Activated T-helper 1 cell treated with anti-CD3 and anti-CD28 coated beads, Interleukin-12 subunit alpha, Interleukin-12 subunit beta, Interleukin-2, Interleukin-4 antibody, amounts not matched to agents 30 ng/mL and 10 ng/mL and 1 ng/mL, durations not matched to agents 14 hours and 24 hours and 36 hours (primary cell): ENCODE measurements at regions of chr14 and their contacts with region 1.

Region 1: GRCh38 chr14:65287264-65288131 is 125.0 kb upstream of the FUT8 start:
- DNase-seq: peak; percentile 63
- H3K4me3 Mint-ChIP-seq: peak overlapping the region; percentile 82
- H3K27ac Mint-ChIP-seq: peak overlapping the region; percentile 97
- H3K4me1 Mint-ChIP-seq: peaks cover 82% of the 10 kb centered on the region
- H3K27me3 Mint-ChIP-seq: no peaks in the 10 kb centered on the region

Region 2: DNA sequence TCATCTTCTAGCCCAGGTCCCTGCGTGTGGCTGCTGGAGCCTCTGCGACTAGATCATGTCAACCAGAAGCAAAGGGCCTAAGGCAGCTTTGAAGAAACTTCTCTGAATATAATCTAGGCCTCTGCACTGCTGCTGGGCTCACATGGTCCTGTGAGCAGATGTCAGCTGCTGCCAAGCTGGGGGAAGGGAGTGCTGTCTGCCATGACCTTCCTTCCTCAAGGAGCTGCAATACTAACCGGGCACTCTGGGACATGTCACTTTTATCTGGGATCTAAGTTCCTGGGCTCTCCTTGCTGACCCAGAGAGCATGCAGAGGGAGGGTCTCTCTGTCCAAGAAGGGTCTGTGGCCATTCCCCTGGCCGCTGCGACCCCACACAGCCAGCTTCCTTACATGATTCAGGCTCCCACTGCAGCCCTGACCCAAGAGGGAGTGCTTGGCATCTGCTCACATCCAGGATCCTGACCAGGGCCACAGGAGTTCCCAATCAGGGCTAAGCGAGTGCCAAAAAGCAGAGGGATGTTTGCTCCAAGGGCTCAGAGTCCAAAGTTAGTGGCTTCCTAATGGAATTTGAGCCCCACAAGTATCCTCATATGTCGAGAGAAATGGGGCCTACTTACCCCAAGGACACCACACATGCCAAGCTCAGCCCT is 509.3 kb before region 1 on chr14:
- intact Hi-C with region 1: no loop called
- DNase-seq: no peak
- H3K4me3 Mint-ChIP-seq: no peak overlapping the region
- H3K27ac Mint-ChIP-seq: no peak overlapping the region
- H3K4me1 Mint-ChIP-seq: no peaks in the 10 kb centered on the region
- H3K27me3 Mint-ChIP-seq: peaks cover 2% of the 10 kb centered on the region

Region 3: GRCh38 chr14:65102441-65103149 is 184.9 kb before region 1 on chr14 and contains the start of gene MAX:
- intact Hi-C with region 1: loop called (anchors 5 kb)
- DNase-seq: peak; percentile 98
- H3K4me3 Mint-ChIP-seq: peak within 1 kb of the TSS; percentile 95
- H3K27ac Mint-ChIP-seq: peak within 1 kb of the TSS; percentile 95
- H3K4me1 Mint-ChIP-seq: peaks cover 33% of the 10 kb centered on the region
- H3K27me3 Mint-ChIP-seq: peaks cover 6% of the 10 kb centered on the region
- total RNA-seq, gene MAX: 135 and 137 TPM in 2 replicates

Region 4: GRCh38 chr14:65206448-65207096 is 80.9 kb before region 1 on chr14:
- intact Hi-C with region 1: loop called (anchors 1 kb)
- DNase-seq: no peak
- H3K4me3 Mint-ChIP-seq: peak overlapping the region; percentile 72
- H3K27ac Mint-ChIP-seq: peak overlapping the region; percentile 92
- H3K4me1 Mint-ChIP-seq: peaks cover 70% of the 10 kb centered on the region
- H3K27me3 Mint-ChIP-seq: no peaks in the 10 kb centered on the region

Region 5: GRCh38 chr14:65336191-65336591 is 48.7 kb after region 1 on chr14:
- intact Hi-C with region 1: loop called (anchors 1 kb)
- DNase-seq: peak; percentile 63
- H3K4me3 Mint-ChIP-seq: peak overlapping the region; percentile 91
- H3K27ac Mint-ChIP-seq: peak overlapping the region; percentile 96
- H3K4me1 Mint-ChIP-seq: peaks cover 59% of the 10 kb centered on the region
- H3K27me3 Mint-ChIP-seq: no peaks in the 10 kb centered on the region

Region 6: DNA sequence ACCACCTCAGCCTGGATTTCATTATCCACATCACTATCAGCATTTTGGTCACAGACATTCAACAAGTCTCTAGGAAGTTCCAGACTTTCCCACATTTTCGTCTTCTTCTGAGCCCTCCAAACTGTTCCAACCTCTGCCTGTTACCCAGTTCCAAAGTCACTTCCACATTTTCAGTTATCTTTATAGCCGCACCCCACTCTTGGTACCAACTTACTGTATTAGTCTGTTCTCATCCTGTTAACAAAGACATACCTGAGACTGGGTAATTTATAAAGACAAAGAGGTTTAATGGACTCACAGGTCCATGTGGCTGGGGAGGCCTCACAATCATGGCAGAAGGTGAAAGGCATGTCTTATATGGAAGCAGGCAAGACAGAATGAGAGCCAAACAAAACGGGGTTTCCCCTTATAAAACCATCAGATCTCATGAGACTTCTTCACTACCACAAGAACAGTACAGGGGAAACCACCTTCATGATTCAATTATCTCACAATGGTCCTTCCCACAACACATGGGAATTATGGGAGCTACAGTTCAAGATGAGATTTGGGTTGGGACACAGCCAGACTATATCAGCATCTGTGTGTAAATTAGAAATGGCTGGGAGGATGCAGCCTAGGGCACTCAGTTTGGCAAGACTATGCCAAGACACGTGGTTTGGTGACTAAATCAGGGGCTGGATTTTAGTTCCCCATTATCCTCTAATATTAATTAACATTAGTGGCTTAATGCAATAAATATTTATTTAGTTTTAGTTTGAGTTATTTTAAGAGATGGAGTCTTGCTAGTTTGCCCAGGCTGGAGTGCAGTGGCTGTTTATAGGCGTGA is 108.8 kb after region 1 on chr14:
- intact Hi-C with region 1: loop called (anchors 1 kb)
- DNase-seq: no peak
- H3K4me3 Mint-ChIP-seq: peak overlapping the region; percentile 48
- H3K27ac Mint-ChIP-seq: peak overlapping the region; percentile 76
- H3K4me1 Mint-ChIP-seq: peaks cover 40% of the 10 kb centered on the region
- H3K27me3 Mint-ChIP-seq: no peaks in the 10 kb centered on the region

Region 7: DNA sequence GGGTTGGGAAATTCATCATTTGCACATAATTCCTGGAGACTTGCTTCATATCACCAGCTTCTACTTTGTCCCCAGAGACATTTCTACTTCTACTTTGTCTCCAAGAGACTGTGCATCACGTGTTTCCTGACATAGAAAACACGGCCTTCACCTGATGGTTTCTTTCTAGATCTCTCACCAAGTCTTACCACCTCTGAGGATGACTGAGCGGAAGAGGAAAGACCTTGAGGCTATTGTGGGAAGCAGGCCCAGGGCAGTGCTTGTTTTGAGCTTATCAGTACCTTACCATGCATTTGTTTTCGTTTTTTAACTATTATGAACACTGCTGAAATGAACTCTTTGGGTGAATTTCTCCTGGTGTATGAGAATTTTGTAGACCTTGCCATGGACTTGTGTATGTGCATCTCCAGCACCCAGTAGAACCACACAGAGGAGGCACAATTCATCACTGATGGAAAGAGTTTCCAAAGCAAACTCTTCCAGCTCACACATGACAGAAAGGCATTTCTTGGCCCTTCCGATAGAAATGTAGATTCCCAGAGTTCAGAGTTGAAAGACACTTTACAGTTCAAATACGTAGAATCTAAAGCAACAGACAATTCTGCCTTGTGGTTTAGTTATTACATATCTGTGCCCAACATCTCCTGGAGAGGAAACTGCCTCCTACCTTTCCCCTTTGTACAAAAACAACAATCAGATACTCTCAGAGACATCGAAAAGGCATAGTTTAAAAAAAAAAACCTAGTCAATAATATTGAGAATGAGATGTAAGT is 559.8 kb after region 1 on chr14:
- intact Hi-C with region 1: loop called (anchors 2 kb)
- DNase-seq: peak; percentile 82
- H3K4me3 Mint-ChIP-seq: peak overlapping the region; percentile 59
- H3K27ac Mint-ChIP-seq: peak overlapping the region; percentile 90
- H3K4me1 Mint-ChIP-seq: peaks cover 82% of the 10 kb centered on the region
- H3K27me3 Mint-ChIP-seq: no peaks in the 10 kb centered on the region